HCT116 (cell line): ENCODE measurements at regions of chr16 and their contacts with region 1.

Region 1: DNA sequence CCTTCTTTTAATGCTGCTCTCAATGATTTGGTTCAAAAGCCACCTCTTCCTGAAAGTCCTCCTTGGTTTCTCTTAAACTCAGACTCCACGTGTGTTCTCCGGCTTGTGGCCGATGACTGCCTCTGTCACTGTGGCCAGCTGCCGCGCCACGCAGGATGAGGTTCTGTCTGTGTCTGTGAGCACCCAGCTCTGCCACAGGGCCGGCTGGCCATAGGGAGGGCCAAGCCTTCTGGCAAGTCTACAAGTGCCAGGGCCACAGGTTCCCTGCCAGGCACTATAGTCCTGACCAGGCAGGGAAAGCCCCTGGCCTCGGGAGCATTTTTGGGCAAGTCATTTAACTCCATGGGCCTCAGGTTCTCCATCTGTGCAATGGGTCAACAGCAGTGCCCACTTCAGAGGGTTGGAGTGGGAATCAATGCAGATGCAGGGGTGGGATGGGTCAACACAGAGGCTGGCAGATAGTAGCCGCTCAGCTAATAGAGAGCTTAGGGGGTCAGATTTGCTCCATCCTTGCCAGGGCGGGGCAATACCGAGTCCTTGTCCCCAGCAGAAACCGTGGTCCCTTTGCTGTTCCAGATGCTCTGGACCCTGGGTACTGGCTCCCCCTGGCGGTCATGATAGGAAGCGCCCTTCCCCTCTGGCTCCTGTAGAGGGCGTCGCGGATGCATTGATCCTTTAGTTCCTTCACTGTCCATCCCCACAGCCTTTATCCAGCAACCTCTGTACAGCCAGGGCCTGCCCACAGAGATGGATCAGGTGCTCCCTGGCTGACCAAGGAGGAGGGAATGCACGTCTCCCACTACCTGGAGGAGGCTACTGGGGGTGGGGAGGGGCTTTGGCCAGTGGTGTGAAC is 19.3 kb upstream of the ADGRG3 start:
- DNase-seq: peak; percentile 61
- ATAC-seq: peak; percentile 90
- H3K4me3 ChIP-seq: no peak overlapping the region
- H3K27ac ChIP-seq: no peak overlapping the region
- H3K4me1 ChIP-seq: peaks cover 0 to 12% of the 10 kb centered on the region in 2 experiments; a peak in 2 of 4 replicates
- H3K27me3 ChIP-seq: no peaks in the 10 kb centered on the region
- CTCF ChIP-seq: peak; percentile 100
- POLR2A ChIP-seq: no peak
- RAD21 ChIP-seq: peak; percentile 99

Region 2: GRCh38 chr16:57591086-57591869 is 57.5 kb before region 1 on chr16:
- CTCF ChIA-PET with region 1: interaction called, 31 read pairs
- POLR2A ChIA-PET with region 1: interaction called, 3 read pairs
- RAD21 ChIA-PET with region 1: interaction called, 5 to 6 read pairs
- intact Hi-C with region 1: loop called (anchors 1 kb)
- DNase-seq: peak; percentile 76
- ATAC-seq: peak; percentile 92
- H3K4me3 ChIP-seq: peak overlapping the region; percentile 30 to 54
- H3K27ac ChIP-seq: peak overlapping the region; percentile 42
- H3K4me1 ChIP-seq: peaks cover 11 to 21% of the 10 kb centered on the region in 2 experiments
- H3K27me3 ChIP-seq: no peaks in the 10 kb centered on the region
- CTCF ChIP-seq: peak; percentile 91 to 99 (median 93)
- POLR2A ChIP-seq: no peak
- RAD21 ChIP-seq: peak; percentile 93

Region 3: DNA sequence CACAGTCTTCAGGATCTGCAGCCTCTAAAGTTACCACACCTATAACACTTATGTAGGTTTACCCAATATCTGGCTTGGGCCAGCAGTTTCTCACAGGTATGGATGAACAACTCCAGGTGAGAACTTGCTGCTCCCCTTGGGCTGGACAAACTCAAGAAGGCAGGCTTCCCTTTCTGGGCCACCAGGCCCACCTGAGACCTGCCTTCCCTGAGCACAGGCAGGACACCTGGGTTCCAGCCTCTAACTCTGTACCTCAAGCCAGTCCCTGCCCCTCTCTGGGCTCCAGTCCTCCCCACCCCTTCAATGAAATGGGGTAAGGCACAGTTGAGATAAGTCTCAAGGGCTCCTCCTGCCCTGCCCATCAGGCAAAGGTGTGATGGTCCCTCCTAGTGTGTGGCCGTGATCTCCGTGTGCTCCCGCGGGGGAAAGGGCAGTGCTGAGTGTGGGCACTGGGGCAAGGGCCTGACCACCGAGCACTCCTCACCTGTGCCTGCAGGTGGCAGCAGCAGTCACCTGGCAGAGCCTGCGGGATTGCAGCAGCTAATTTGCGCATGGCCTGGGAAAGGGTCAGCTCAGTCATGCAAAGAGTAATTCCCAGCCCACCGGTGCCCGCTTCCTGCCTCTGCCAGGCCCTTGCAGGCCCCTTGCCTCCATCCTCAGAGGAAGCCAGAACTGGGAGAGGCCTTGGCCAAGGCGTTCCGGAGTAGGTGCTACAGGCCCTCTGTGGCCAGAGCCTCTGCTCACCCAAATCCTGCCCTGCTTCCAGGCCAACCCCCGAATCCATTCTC is 48.6 kb before region 1 on chr16:
- CTCF ChIA-PET with region 1: interaction called, 5 read pairs
- POLR2A ChIA-PET with region 1: interaction called, 3 read pairs
- RAD21 ChIA-PET with region 1: no interaction called
- intact Hi-C with region 1: loop called (anchors 2 kb)
- DNase-seq: peak; percentile 47
- ATAC-seq: peak; percentile 99
- H3K4me3 ChIP-seq: no peak overlapping the region
- H3K27ac ChIP-seq: no peak overlapping the region; the same call in 1 of the 2 replicates
- H3K4me1 ChIP-seq: peaks cover 0 to 8% of the 10 kb centered on the region in 2 experiments; a peak in 3 of 4 replicates
- H3K27me3 ChIP-seq: no peaks in the 10 kb centered on the region
- CTCF ChIP-seq: peak; percentile 80 to 97 (median 87)
- POLR2A ChIP-seq: no peak
- RAD21 ChIP-seq: peak; percentile 86

Region 4: GRCh38 chr16:57720142-57720575 is 71.3 kb after region 1 on chr16:
- CTCF ChIA-PET with region 1: no interaction called
- POLR2A ChIA-PET with region 1: no interaction called
- RAD21 ChIA-PET with region 1: no interaction called
- intact Hi-C with region 1: loop called (anchors 2 kb)
- DNase-seq: no peak
- ATAC-seq: peak; percentile 96
- H3K4me3 ChIP-seq: no peak overlapping the region
- H3K27ac ChIP-seq: no peak overlapping the region
- H3K4me1 ChIP-seq: no peaks in the 10 kb centered on the region
- H3K27me3 ChIP-seq: 0 out of 2 replicates have a peak, but pooled peaks cover 7% of the 10 kb centered on the region
- CTCF ChIP-seq: peak; percentile 74 to 86 (median 83)
- POLR2A ChIP-seq: no peak
- RAD21 ChIP-seq: peak; percentile 75

Region 5: DNA sequence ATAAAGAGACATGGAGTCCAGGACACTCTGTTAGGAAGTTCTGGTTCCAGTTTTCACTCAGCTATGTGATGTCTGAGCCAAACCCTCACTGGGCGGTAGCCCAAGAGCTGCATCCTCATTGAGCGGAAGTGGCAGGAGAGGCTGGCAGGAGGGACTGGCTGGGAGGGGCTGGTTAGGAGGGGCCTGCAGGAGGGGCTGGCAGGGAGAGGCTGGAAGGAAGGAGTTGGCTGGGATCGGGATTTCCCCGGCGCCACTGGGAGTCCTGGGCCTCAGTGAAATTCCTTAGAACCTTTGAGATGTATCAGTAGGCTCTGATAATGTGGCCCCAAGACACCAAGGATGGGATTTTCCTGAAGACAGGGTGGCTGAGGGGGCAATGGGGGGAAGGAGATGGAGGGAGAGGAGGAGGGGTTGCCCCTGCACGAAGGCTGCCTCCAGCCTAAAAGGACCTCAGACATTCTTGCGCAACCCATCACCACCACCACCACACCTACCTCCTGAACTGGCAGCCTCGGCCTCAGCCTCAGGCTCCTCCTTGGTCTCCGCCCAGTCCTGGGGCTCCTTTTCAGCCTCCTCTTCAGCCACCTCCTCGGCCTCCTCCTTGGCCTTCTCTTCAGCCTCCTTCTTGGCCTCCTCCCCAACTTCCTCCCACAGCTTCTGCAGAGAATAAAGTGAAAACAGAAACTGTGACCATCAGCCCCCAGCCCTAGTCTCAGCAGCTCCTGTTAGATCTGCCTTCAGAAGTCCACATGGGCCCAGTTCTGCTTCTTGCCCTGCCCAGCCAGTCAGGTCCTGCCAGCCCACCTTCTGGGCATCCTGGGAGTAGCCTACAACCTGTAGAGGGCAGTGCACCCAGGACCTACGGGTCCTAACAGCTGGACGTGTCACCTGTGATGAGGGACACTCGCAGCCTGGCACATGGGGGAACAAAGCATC is 290.4 kb after region 1 on chr16:
- CTCF ChIA-PET with region 1: no interaction called
- POLR2A ChIA-PET with region 1: no interaction called
- RAD21 ChIA-PET with region 1: no interaction called
- intact Hi-C with region 1: no loop called
- DNase-seq: peak; percentile 13
- ATAC-seq: peak; percentile 85
- H3K4me3 ChIP-seq: no peak overlapping the region
- H3K27ac ChIP-seq: no peak overlapping the region
- H3K4me1 ChIP-seq: no peaks in the 10 kb centered on the region
- H3K27me3 ChIP-seq: no peaks in the 10 kb centered on the region
- CTCF ChIP-seq: peak in 2 of 3 experiments; percentile 55 to 60; a peak in 3 of 6 replicates
- POLR2A ChIP-seq: no peak
- RAD21 ChIP-seq: 0 out of 2 replicates have a peak, but pooled peaks have one; percentile 15

Region 6: DNA sequence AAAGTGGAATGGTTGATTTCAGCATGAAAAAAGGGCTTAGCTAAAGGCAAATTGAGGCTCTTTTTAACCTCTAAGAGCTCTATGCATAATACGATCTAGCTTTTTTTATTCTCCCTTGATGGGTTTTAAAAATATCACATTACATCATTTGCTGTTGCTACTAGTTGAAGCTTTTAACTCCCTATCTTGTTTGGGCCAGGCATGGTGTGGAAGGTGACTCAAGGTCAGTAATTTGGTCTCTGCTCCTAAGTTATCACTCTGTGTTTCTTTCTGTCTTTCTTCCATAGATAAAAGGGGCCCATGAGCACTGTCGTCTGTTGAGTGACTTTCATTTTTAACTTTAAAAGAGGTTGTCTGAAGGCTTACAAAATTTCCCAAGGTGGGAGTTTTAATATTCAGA is 1143.4 kb after region 1 on chr16:
- CTCF ChIA-PET with region 1: no interaction called
- POLR2A ChIA-PET with region 1: no interaction called
- RAD21 ChIA-PET with region 1: no interaction called
- intact Hi-C with region 1: no loop called
- DNase-seq: no peak
- ATAC-seq: no peak
- H3K4me3 ChIP-seq: no peak overlapping the region
- H3K27ac ChIP-seq: no peak overlapping the region
- H3K4me1 ChIP-seq: no peaks in the 10 kb centered on the region
- H3K27me3 ChIP-seq: peaks cover 14% of the 10 kb centered on the region; the same call in 1 of the 2 replicates
- CTCF ChIP-seq: no peak
- POLR2A ChIP-seq: no peak
- RAD21 ChIP-seq: no peak